PC-3 (cell line): ENCODE measurements at regions of chr1 and their contacts with region 1.

Region 1: GRCh38 chr1:223081181-223081994 is 61.7 kb downstream of the TLR5 start:
- DNase-seq: peak; percentile 99
- ATAC-seq: peak; percentile 96
- H3K4me3 ChIP-seq: peak overlapping the region; percentile 39; the same call in 1 of the 2 replicates
- H3K27ac ChIP-seq: peak overlapping the region; percentile 49
- H3K4me1 ChIP-seq: no peaks in the 10 kb centered on the region
- H3K27me3 ChIP-seq: no peaks in the 10 kb centered on the region
- CTCF ChIP-seq: peak; percentile 97

Region 2: GRCh38 chr1:222739465-222739864 is 341.9 kb before region 1 on chr1:
- CTCF ChIA-PET with region 1: interaction called, 3 read pairs
- POLR2A ChIA-PET with region 1: no interaction called
- intact Hi-C with region 1: loop called (anchors 2 kb)
- DNase-seq: no peak
- ATAC-seq: no peak
- H3K4me3 ChIP-seq: no peak overlapping the region
- H3K27ac ChIP-seq: no peak overlapping the region
- H3K4me1 ChIP-seq: peaks cover 17% of the 10 kb centered on the region
- H3K27me3 ChIP-seq: no peaks in the 10 kb centered on the region
- CTCF ChIP-seq: no peak

Region 3: GRCh38 chr1:222754366-222755139 is 326.8 kb before region 1 on chr1:
- CTCF ChIA-PET with region 1: no interaction called
- POLR2A ChIA-PET with region 1: no interaction called
- intact Hi-C with region 1: loop called (anchors 5 kb)
- DNase-seq: peak; percentile 99
- ATAC-seq: peak; percentile 98
- H3K4me3 ChIP-seq: 0 out of 2 replicates have a peak overlapping the region, but pooled peaks have one; percentile 0
- H3K27ac ChIP-seq: peak overlapping the region; percentile 85
- H3K4me1 ChIP-seq: peaks cover 21% of the 10 kb centered on the region
- H3K27me3 ChIP-seq: no peaks in the 10 kb centered on the region
- CTCF ChIP-seq: no peak

Region 4: GRCh38 chr1:222792744-222793143 is 288.6 kb before region 1 on chr1:
- CTCF ChIA-PET with region 1: interaction called, 4 read pairs
- POLR2A ChIA-PET with region 1: no interaction called
- intact Hi-C with region 1: loop called (anchors 1 kb)
- DNase-seq: peak; percentile 74
- ATAC-seq: peak; percentile 38; the same call in 1 of the 2 replicates
- H3K4me3 ChIP-seq: no peak overlapping the region
- H3K27ac ChIP-seq: no peak overlapping the region
- H3K4me1 ChIP-seq: no peaks in the 10 kb centered on the region
- H3K27me3 ChIP-seq: no peaks in the 10 kb centered on the region
- CTCF ChIP-seq: peak; percentile 95

Region 5: GRCh38 chr1:223001653-223002634 is 79.4 kb before region 1 on chr1:
- CTCF ChIA-PET with region 1: no interaction called
- POLR2A ChIA-PET with region 1: no interaction called
- intact Hi-C with region 1: loop called (anchors 2 kb)
- DNase-seq: peak; percentile 64
- ATAC-seq: peak; percentile 83
- H3K4me3 ChIP-seq: no peak overlapping the region
- H3K27ac ChIP-seq: no peak overlapping the region
- H3K4me1 ChIP-seq: peaks cover 18% of the 10 kb centered on the region
- H3K27me3 ChIP-seq: no peaks in the 10 kb centered on the region
- CTCF ChIP-seq: peak; percentile 70

Region 6: GRCh38 chr1:223017291-223017690 is 64.1 kb before region 1 on chr1:
- CTCF ChIA-PET with region 1: no interaction called
- POLR2A ChIA-PET with region 1: no interaction called
- intact Hi-C with region 1: no loop called
- DNase-seq: no peak
- ATAC-seq: no peak
- H3K4me3 ChIP-seq: no peak overlapping the region
- H3K27ac ChIP-seq: no peak overlapping the region
- H3K4me1 ChIP-seq: no peaks in the 10 kb centered on the region
- H3K27me3 ChIP-seq: no peaks in the 10 kb centered on the region
- CTCF ChIP-seq: no peak